Mammary epithelial cell (primary cell): ENCODE measurements at regions of chr7 and their contacts with region 1.

Region 1: GRCh38 chr7:83410989-83411591 is 237.8 kb downstream of the SEMA3E start:
- DNase-seq: peak; percentile 9
- H3K4me3 ChIP-seq: no peak overlapping the region
- H3K27ac ChIP-seq: no peak overlapping the region
- H3K4me1 ChIP-seq: peaks cover 9% of the 10 kb centered on the region
- H3K27me3 ChIP-seq: no peaks in the 10 kb centered on the region
- CTCF ChIP-seq: peak; percentile 61 to 70

Region 2: GRCh38 chr7:83451501-83452045 is 40.5 kb after region 1 on chr7:
- CTCF ChIA-PET with region 1: no interaction called
- dilution Hi-C with region 1: no loop called
- in situ Hi-C with region 1: no loop called
- intact Hi-C with region 1: no loop called
- DNase-seq: no peak
- H3K4me3 ChIP-seq: no peak overlapping the region
- H3K27ac ChIP-seq: no peak overlapping the region
- H3K4me1 ChIP-seq: no peaks in the 10 kb centered on the region
- H3K27me3 ChIP-seq: no peaks in the 10 kb centered on the region
- CTCF ChIP-seq: no peak

Region 3: GRCh38 chr7:83468251-83468739 is 57.2 kb after region 1 on chr7:
- CTCF ChIA-PET with region 1: no interaction called
- dilution Hi-C with region 1: no loop called
- in situ Hi-C with region 1: no loop called
- intact Hi-C with region 1: loop called (anchors 10 kb)
- DNase-seq: peak; percentile 98
- H3K4me3 ChIP-seq: peak overlapping the region in 2 of 3 experiments; percentile 11 to 14
- H3K27ac ChIP-seq: peak overlapping the region; percentile 66
- H3K4me1 ChIP-seq: peaks cover 16% of the 10 kb centered on the region
- H3K27me3 ChIP-seq: no peaks in the 10 kb centered on the region
- CTCF ChIP-seq: peak in 1 of 2 donors; percentile 22

Region 4: GRCh38 chr7:83514977-83515376 is 103.9 kb after region 1 on chr7:
- CTCF ChIA-PET with region 1: no interaction called
- dilution Hi-C with region 1: no loop called
- in situ Hi-C with region 1: no loop called
- intact Hi-C with region 1: loop called (anchors 1 kb)
- DNase-seq: no peak
- H3K4me3 ChIP-seq: no peak overlapping the region
- H3K27ac ChIP-seq: no peak overlapping the region
- H3K4me1 ChIP-seq: no peaks in the 10 kb centered on the region
- H3K27me3 ChIP-seq: no peaks in the 10 kb centered on the region
- CTCF ChIP-seq: no peak

Region 5: GRCh38 chr7:83655951-83656556 is 245.0 kb after region 1 on chr7:
- CTCF ChIA-PET with region 1: no interaction called
- dilution Hi-C with region 1: no loop called
- in situ Hi-C with region 1: loop called (anchors 10 kb)
- intact Hi-C with region 1: loop called (anchors 1 kb)
- DNase-seq: peak; percentile 32
- H3K4me3 ChIP-seq: no peak overlapping the region
- H3K27ac ChIP-seq: no peak overlapping the region
- H3K4me1 ChIP-seq: no peaks in the 10 kb centered on the region
- H3K27me3 ChIP-seq: no peaks in the 10 kb centered on the region
- CTCF ChIP-seq: peak; percentile 92 to 95

Region 6: GRCh38 chr7:83663131-83663530 is 252.0 kb after region 1 on chr7:
- CTCF ChIA-PET with region 1: no interaction called
- dilution Hi-C with region 1: no loop called
- in situ Hi-C with region 1: loop called (anchors 10 kb)
- intact Hi-C with region 1: no loop called
- DNase-seq: no peak
- H3K4me3 ChIP-seq: no peak overlapping the region
- H3K27ac ChIP-seq: no peak overlapping the region
- H3K4me1 ChIP-seq: no peaks in the 10 kb centered on the region
- H3K27me3 ChIP-seq: peaks cover 4% of the 10 kb centered on the region
- CTCF ChIP-seq: no peak

Region 7: DNA sequence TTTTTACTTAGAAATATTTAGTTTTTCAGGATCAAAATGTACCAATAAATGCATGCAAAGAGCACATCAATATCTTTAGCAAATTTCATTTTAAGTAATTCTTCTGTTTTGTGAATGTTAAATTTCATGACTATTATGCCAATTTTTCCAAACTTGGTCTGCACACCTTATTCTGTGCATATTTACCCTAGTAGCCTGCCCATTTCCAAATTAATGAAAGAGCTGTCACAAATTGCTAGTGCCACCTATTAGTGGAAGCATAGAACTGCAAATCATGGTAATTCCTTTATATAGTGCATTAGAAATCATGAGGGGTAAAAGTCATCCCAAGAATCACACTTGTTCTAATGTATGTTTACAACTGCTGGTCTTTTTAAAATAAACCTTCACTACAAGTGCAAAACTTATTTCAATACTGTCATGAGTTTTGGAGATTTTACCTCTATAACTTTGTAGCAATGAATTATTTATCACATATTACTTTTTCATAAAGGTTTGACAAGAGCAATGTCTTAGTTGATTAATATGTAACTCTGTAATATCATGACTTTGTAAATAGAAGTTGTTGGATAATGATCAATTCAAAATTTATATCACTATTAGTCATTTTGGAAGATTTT is 777.8 kb after region 1 on chr7:
- CTCF ChIA-PET with region 1: no interaction called
- dilution Hi-C with region 1: no loop called
- in situ Hi-C with region 1: no loop called
- intact Hi-C with region 1: loop called (anchors 5 kb)
- DNase-seq: no peak
- H3K4me3 ChIP-seq: no peak overlapping the region
- H3K27ac ChIP-seq: peak overlapping the region; percentile 94
- H3K4me1 ChIP-seq: peaks cover 27% of the 10 kb centered on the region
- H3K27me3 ChIP-seq: no peaks in the 10 kb centered on the region
- CTCF ChIP-seq: peak; percentile 46 to 69